ENCODE measurements at regions of chr6 and their contacts with region 1.

Region 1: DNA sequence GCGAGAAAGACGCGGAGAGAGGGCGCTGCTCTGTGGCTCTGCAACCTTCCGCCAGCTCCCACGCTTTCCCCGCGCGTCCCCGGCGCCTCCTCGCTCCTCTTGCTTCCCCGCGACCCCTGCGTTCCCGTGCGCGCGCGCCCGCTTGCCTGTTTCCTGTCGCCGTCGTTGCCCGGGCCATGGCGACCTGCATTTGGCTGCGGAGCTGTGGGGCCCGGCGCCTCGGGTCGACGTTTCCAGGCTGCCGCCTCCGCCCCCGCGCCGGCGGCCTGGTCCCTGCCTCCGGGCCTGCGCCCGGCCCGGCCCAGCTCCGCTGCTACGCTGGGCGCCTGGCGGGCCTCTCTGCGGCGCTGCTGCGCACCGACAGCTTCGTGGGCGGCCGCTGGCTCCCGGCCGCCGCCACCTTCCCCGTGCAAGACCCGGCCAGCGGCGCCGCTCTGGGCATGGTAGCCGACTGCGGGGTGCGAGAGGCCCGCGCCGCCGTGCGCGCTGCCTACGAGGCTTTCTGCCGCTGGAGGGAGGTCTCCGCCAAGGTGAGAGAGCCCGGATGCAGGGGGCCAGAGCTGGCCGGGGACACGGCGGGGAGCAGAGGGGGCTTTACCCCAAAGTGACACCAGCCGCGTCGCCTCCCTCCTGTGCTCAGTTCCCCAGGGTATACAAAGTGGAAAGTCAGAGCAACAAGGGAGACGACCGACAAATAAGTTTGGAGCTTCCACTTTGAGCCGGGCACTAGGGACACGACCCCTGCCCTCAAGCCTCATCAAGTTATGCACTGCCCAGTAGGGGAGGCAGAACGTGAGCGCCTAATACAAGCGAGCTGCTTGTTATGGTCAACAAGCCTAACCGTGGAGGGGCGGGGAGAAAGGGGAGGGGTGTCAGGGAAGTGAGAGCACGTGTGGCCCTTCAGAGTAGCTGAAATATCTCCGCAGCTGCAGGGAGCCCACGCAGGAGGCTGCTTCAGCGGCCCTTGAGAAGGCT is at the start of gene ALDH5A1:
- DNase-seq: peak; percentile 48 to 70
- ATAC-seq: peak; percentile 85 to 86
- H3K4me3 ChIP-seq: peak within 1 kb of the TSS; percentile 54
- H3K27ac ChIP-seq: peak within 1 kb of the TSS; percentile 77 to 99
- H3K4me1 ChIP-seq: peaks cover 6% of the 10 kb centered on the region; the same call in 1 of the 3 replicates
- CTCF ChIP-seq: peak; percentile 27; the same call in 2 of the 3 replicates
- EP300 ChIP-seq: no peak
- POLR2A ChIP-seq: peak; percentile 39
- RAD21 ChIP-seq: 0 out of 5 replicates have a peak, but pooled peaks of 1 of the 2 experiments have one; percentile 14
- polyA plus RNA-seq, gene ALDH5A1: 8.8 and 10.9 TPM in 2 replicates

Region 2: GRCh38 chr6:24513602-24514001 is 18.5 kb after region 1 on chr6:
- CTCF ChIA-PET with region 1: interaction called, 17 read pairs
- POLR2A ChIA-PET with region 1: no interaction called
- DNase-seq: no peak
- ATAC-seq: no peak
- H3K4me3 ChIP-seq: no peak overlapping the region
- H3K27ac ChIP-seq: no peak overlapping the region
- H3K4me1 ChIP-seq: no peaks in the 10 kb centered on the region
- CTCF ChIP-seq: no peak
- EP300 ChIP-seq: no peak
- POLR2A ChIP-seq: no peak
- RAD21 ChIP-seq: no peak

Region 3: DNA sequence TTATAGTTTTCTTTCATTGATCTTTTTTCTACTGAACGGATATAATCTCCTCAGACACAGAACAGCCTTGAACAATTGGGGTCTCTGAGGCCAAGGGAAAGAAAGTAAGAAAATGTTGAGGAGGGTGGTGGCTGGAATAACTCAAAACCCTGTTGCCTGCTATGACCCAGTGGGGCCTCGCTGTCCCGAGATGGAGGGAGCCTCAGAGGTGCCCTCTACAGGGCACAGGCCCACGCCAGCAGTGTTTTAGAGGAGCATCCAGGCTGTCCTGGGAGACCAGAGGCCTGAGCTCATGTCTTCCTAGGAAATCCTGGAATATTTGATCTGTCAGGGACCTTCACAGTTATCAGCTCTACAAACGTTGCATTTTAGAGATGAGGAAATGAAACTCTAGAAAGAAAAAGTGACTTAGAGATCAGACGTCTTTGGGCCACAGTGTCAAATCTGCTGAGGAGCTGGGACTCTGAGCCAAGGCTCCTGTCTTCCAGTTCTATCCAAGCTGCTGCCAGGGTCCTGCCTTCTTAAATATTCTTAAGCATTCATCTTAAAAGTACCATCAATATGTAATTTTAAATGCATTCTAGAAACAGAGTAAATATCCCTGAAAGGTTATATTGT is 25.9 kb after region 1 on chr6:
- CTCF ChIA-PET with region 1: interaction called, 33 read pairs
- POLR2A ChIA-PET with region 1: interaction called, 3 read pairs
- DNase-seq: peak; percentile 48 to 63
- ATAC-seq: peak; percentile 99
- H3K4me3 ChIP-seq: no peak overlapping the region
- H3K27ac ChIP-seq: no peak overlapping the region
- H3K4me1 ChIP-seq: no peaks in the 10 kb centered on the region
- CTCF ChIP-seq: peak; percentile 50
- EP300 ChIP-seq: no peak
- POLR2A ChIP-seq: no peak
- RAD21 ChIP-seq: peak; percentile 37 to 38; a peak in 3 of 5 replicates

Region 4: DNA sequence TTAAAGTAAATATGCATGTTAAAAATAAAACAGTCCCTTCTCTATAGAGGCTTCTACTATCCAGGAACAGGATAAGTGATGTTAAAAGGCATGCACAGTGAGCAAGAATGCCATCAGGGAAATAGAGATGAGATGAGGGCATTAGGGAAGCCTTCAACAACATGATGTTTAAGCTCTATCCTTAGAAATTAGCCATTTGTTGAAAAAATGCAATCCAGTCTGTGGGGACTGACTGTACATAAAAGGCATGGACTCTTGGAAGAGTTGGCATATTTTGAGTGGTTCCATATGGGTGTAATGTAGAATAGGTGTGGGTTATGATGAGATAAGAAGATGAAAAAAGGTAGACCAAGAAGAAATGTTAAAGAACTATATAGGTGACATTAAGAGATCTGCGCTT is 145.1 kb after region 1 on chr6:
- CTCF ChIA-PET with region 1: no interaction called
- POLR2A ChIA-PET with region 1: no interaction called
- DNase-seq: no peak
- ATAC-seq: no peak
- H3K4me3 ChIP-seq: no peak overlapping the region
- H3K27ac ChIP-seq: no peak overlapping the region
- H3K4me1 ChIP-seq: peaks cover 17% of the 10 kb centered on the region; the same call in 2 of the 3 replicates
- CTCF ChIP-seq: no peak
- EP300 ChIP-seq: no peak
- POLR2A ChIP-seq: no peak
- RAD21 ChIP-seq: no peak